ENCODE measurements at regions of chr7 and their contacts with region 1.

Region 1: DNA sequence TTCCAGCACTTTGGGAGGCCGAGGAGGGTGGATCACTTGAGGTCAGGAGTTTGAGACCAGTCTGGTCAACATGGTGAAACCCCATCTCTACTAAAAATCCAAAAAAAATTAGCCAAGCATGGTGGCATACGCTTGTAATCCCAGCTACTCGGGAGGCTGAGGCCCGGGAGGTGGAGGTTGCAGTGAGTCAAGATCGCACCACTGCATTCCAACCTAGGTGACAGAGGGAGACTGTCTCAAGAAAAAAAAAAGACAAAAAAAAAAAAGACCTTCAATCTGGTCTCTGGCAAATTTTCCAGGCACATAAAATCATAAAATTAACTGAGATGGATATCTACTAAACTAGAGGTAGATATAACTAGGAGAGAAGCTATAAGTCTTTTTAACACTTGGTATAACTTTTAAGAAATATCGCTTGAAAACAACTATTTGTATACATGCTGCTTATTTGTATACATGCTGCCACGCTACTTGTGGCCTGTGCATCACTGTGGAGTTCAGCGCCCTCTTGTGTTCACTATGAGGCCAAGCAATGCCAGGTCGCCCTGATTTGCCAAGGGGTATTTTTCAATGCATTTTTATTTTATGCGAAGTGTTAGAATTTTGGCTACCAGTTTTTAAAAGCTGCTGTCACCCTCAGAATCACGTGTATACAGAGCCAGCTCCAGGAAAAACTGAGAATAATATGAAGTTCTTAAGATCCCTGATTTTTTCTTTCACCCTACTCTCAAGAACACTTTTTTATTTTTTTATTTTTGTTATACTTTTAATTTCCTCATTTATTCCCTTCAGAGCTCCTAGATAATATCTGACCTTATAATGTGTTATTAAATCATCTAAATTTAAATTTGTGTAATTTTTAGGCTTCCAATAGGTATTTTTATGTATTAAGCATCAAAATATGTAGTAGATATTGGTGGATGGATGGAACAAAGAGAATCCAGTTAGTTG is 26.7 kb downstream of the CYCS start:
- DNase-seq: peak; percentile 67

Region 2: GRCh38 chr7:24812310-24812945 is 285.9 kb before region 1 on chr7:
- CTCF ChIA-PET with region 1: interaction called, 49 read pairs
- POLR2A ChIA-PET with region 1: no interaction called
- DNase-seq: peak; percentile 64

Region 3: GRCh38 chr7:24917510-24918239 is 180.7 kb before region 1 on chr7:
- CTCF ChIA-PET with region 1: no interaction called
- POLR2A ChIA-PET with region 1: no interaction called
- DNase-seq: no peak

Measured in HEK293T (cell line).